ENCODE measurements at regions of chr1 and their contacts with region 1.

Region 1: DNA sequence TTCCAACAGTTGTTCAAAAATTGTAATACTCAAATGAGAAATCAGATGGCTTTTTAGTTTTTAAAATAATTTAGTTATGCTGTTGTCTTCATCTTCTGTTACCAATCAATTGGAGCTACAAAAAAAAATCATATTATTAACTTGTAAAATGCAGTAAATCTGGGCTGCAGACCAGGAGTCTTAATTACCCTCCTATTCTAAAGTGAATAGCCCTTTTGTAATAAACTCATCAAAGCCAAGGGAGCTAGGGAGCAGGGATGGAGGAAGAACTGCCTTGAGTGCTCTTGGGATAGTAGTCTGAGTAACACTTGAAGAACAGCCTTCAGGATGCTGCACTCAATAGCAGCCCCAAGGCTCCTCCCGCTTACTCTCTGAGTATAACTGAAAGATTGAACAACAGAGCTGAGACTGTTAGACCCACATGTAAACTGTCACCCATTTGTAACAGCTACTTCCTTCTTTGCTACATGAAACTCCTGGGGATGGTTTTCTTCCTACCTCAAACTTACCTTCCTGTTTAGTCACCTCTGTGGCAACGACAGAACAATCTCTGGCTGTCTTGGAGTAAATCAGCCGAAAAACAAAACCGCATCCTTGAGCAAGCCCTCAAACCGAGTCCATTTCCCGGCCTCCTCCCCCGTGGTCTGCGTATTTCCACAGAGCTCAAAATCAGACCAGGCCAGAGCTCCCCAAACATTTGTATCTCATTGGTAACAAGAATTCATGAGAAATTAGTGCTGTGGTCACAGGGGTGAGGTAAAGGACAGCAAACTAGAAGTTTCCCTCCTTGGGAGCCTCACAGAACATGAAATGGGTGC is 55.9 kb downstream of the CD58 start:
- DNase-seq: peak; percentile 97 to 98 (median 98)
- H3K4me3 ChIP-seq: peak overlapping the region in 1 of 3 experiments; percentile 53
- H3K4me3 Mint-ChIP-seq: peak overlapping the region; percentile 60 to 76
- H3K27ac ChIP-seq: peak overlapping the region; percentile 92 to 98
- H3K27ac Mint-ChIP-seq: peak overlapping the region; percentile 99 to 100 (median 100)
- H3K4me1 ChIP-seq: peaks cover 38 to 49% of the 10 kb centered on the region in 2 donors
- H3K4me1 Mint-ChIP-seq: peaks cover 63% of the 10 kb centered on the region
- H3K27me3 ChIP-seq: no peaks in the 10 kb centered on the region
- H3K27me3 Mint-ChIP-seq: peaks cover 0 to 5% (median 0%) of the 10 kb centered on the region in 3 donors
- CTCF ChIP-seq: no peak

Region 2: GRCh38 chr1:116531917-116532316 is 17.0 kb after region 1 on chr1:
- intact Hi-C with region 1: loop called in 1 of 2 experiments (anchors 2 kb)
- DNase-seq: no peak
- H3K4me3 ChIP-seq: no peak overlapping the region
- H3K4me3 Mint-ChIP-seq: no peak overlapping the region
- H3K27ac ChIP-seq: peak overlapping the region in 1 of 2 donors; percentile 83
- H3K27ac Mint-ChIP-seq: peak overlapping the region; percentile 23 to 95 (median 62)
- H3K4me1 ChIP-seq: peaks cover 18 to 25% of the 10 kb centered on the region in 2 donors
- H3K4me1 Mint-ChIP-seq: peaks cover 26% of the 10 kb centered on the region
- H3K27me3 ChIP-seq: no peaks in the 10 kb centered on the region
- H3K27me3 Mint-ChIP-seq: peaks cover 0 to 2% (median 2%) of the 10 kb centered on the region in 3 donors
- CTCF ChIP-seq: no peak

Region 3: DNA sequence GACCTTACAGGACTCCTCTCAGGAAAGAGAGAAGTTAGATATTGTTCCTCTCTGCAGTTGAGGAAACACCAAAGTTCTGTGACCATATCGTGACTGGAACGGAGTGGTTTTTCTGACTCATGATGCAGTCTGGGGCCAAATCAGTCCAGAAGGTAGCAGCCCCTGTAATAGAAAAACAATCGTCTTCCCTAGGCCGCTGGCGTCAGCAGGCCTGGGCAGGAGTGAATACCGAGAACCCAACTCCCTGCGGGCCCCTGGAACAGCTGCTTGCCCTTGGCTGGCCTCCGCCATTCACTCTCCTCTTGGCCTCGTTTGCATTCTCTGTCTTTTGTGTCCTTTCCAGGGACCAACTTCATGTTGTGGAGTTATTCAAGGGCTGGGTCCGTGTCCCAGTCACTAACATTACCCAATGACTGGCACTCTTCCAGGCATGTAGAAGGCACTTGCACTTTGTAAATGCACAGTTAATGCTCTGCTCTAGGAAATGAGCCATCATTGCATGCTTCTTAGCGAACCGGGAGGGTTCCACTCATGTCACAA is 475.8 kb after region 1 on chr1:
- intact Hi-C with region 1: no loop called
- DNase-seq: peak; percentile 87 to 97 (median 94)
- H3K4me3 ChIP-seq: peak overlapping the region in 1 of 3 experiments; percentile 26
- H3K4me3 Mint-ChIP-seq: peak overlapping the region; percentile 18 to 68
- H3K27ac ChIP-seq: peak overlapping the region; percentile 96 to 97
- H3K27ac Mint-ChIP-seq: peak overlapping the region; percentile 92 to 99 (median 97)
- H3K4me1 ChIP-seq: peaks cover 72 to 75% of the 10 kb centered on the region in 2 donors
- H3K4me1 Mint-ChIP-seq: peaks cover 89% of the 10 kb centered on the region
- H3K27me3 ChIP-seq: no peaks in the 10 kb centered on the region
- H3K27me3 Mint-ChIP-seq: peaks cover 0 to 8% (median 1%) of the 10 kb centered on the region in 3 donors
- CTCF ChIP-seq: no peak